Gastrocnemius medialis (tissue), 4 donors: ENCODE measurements at regions of chr9 and their contacts with region 1.

Region 1: GRCh38 chr9:104863180-104863883 is 64.6 kb downstream of the ABCA1 start:
- DNase-seq: peak in 1 of 2 donors; percentile 57
- ATAC-seq: peak; percentile 73 to 79
- H3K4me3 ChIP-seq: no peak overlapping the region
- H3K27ac ChIP-seq: peak overlapping the region; percentile 46 to 90 (median 62)
- H3K4me1 ChIP-seq: peaks cover 24 to 35% of the 10 kb centered on the region in 2 donors
- H3K27me3 ChIP-seq: no peaks in the 10 kb centered on the region
- CTCF ChIP-seq: peak; percentile 56 to 78 (median 74)
- POLR2A ChIP-seq: no peak

Region 2: DNA sequence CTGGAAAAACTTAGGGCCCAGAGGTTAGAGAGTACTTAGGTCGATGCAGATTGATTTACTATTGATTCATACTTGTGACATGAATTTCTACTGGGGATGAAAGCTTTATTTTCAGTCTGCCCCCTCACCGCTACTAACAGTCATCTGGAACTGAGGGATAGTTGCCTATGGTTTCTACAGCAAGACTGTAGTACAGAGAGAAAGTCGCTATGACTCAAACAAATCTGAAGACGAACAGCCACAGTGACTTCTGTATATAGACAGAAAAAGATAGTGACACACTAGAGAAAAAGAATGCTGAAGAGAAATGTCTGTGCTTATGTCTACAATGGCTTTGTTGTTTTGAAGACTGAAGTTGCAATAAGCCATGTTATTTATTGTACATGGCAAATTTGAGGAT is 151.7 kb before region 1 on chr9:
- in situ Hi-C with region 1: no loop called
- intact Hi-C with region 1: no loop called
- DNase-seq: no peak
- ATAC-seq: no peak
- H3K4me3 ChIP-seq: no peak overlapping the region
- H3K27ac ChIP-seq: no peak overlapping the region
- H3K4me1 ChIP-seq: no peaks in the 10 kb centered on the region
- H3K27me3 ChIP-seq: no peaks in the 10 kb centered on the region
- CTCF ChIP-seq: no peak
- POLR2A ChIP-seq: no peak

Region 3: GRCh38 chr9:105046907-105047741 is 183.8 kb after region 1 on chr9:
- in situ Hi-C with region 1: no loop called
- intact Hi-C with region 1: no loop called
- DNase-seq: no peak
- ATAC-seq: peak in 1 of 2 donors; percentile 37
- H3K4me3 ChIP-seq: no peak overlapping the region
- H3K27ac ChIP-seq: no peak overlapping the region
- H3K4me1 ChIP-seq: peaks cover 13 to 14% of the 10 kb centered on the region in 2 donors
- H3K27me3 ChIP-seq: no peaks in the 10 kb centered on the region
- CTCF ChIP-seq: no peak
- POLR2A ChIP-seq: no peak

Region 4: GRCh38 chr9:105157130-105157583 is 293.8 kb after region 1 on chr9:
- in situ Hi-C with region 1: loop called (anchors 5 to 10 kb)
- intact Hi-C with region 1: loop called (anchors 2 kb)
- DNase-seq: peak; percentile 14 to 57
- ATAC-seq: peak; percentile 96 to 98
- H3K4me3 ChIP-seq: no peak overlapping the region
- H3K27ac ChIP-seq: no peak overlapping the region
- H3K4me1 ChIP-seq: peaks cover 3 to 5% of the 10 kb centered on the region in 2 donors
- H3K27me3 ChIP-seq: no peaks in the 10 kb centered on the region
- CTCF ChIP-seq: peak in 4 of 5 experiments; percentile 38 to 60 (median 58)
- POLR2A ChIP-seq: no peak

Region 5: DNA sequence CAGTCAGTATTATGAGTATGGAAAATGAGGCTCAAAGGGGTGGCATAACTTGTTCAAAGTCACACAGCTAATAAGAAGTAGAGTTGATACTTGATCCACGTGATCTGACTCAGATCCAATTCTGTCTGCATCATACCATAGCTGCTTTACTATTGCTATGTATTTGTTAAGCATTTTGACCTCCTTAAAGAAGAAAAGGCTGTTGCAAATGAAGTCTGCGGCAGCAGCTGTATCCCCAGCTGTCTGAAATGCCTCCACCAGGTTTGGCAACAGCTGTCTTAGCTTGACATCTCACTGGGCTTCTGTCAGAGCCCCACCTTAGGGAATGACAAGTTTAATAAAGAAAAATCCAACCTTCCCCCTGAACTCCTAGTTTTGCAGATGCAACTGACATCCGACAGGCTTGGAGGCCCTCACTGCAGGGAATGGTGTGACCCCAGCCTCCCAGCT is 305.6 kb after region 1 on chr9:
- in situ Hi-C with region 1: loop called in 1 of 4 experiments (anchors 10 kb)
- intact Hi-C with region 1: no loop called
- DNase-seq: no peak
- ATAC-seq: no peak
- H3K4me3 ChIP-seq: no peak overlapping the region
- H3K27ac ChIP-seq: no peak overlapping the region
- H3K4me1 ChIP-seq: no peaks in the 10 kb centered on the region
- H3K27me3 ChIP-seq: no peaks in the 10 kb centered on the region
- CTCF ChIP-seq: no peak
- POLR2A ChIP-seq: no peak

Region 6: DNA sequence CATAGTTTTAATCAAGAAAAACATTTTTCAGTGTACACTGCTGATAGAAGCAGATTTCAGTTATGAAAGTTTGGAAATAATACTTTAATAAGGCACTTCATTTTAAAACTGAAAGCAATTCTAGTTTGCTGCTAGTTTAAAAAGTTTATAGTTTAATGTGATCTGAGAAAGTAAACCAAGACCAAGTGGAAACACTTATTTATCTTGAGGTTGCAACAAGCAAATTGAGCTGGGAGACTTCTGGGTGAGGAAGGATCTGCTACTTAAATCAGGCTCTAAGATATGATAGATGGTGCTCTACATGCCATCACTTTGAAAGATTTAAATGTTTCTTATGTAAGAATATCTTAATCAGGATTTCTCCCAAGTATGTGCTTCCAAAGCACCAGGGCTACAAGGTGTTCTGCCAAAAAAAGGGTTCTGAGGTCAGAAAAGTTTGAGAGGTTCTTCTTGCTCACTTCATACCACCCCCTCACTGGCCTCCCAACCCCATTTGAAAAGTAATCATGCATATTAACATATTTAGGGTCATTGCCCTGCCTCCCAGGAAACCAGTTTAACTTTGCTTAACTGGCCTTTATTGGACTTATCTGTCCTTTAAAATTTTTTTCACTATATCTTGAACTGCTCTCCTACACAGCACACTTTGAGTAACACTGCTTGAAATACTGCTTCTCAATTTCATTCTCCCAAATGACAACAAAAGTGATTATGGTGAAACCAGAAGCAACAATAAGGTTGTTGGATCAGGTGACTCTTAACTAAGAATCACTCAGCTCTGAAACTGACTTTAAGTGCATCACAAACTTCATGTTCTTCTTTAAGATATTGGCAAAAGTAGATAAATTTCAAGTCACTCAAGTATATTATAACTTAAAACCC is 396.6 kb after region 1 on chr9:
- in situ Hi-C with region 1: no loop called
- intact Hi-C with region 1: no loop called
- DNase-seq: peak in 1 of 2 donors; percentile 19
- ATAC-seq: peak; percentile 72 to 76
- H3K4me3 ChIP-seq: no peak overlapping the region
- H3K27ac ChIP-seq: peak overlapping the region in 2 of 4 donors; percentile 27 to 61
- H3K4me1 ChIP-seq: peaks cover 22 to 29% of the 10 kb centered on the region in 2 donors
- H3K27me3 ChIP-seq: no peaks in the 10 kb centered on the region
- CTCF ChIP-seq: no peak
- POLR2A ChIP-seq: no peak

Region 7: DNA sequence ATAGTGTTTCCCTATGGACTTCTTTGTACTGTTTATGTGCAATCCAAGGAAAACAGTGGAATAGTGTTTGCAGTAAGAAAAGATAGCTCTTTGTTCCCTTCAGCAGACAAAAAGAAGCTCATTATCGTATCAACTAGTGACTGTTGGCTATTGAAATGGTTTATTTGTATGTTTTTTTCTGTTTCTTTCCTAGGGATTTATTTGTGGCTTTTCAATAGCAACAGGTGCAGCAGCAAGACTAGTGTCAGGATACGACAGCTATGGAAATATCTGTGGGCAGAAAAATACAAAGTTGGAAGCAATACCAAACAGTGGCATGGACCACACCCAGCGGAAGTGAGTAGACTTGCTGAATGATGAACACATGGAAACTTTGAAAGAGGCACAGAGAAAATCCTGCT is 446.2 kb after region 1 on chr9:
- in situ Hi-C with region 1: no loop called
- intact Hi-C with region 1: no loop called
- DNase-seq: no peak
- ATAC-seq: no peak
- H3K4me3 ChIP-seq: no peak overlapping the region
- H3K27ac ChIP-seq: no peak overlapping the region
- H3K4me1 ChIP-seq: no peaks in the 10 kb centered on the region
- H3K27me3 ChIP-seq: no peaks in the 10 kb centered on the region
- CTCF ChIP-seq: no peak
- POLR2A ChIP-seq: no peak